Endothelial cell of umbilical vein (primary cell): ENCODE measurements at regions of chr16 and their contacts with region 1.

Region 1: GRCh38 chr16:20944861-20945574 is 44.4 kb downstream of the LYRM1 start:
- DNase-seq: peak; percentile 18
- H3K4me3 ChIP-seq: no peak overlapping the region
- H3K27ac ChIP-seq: no peak overlapping the region
- H3K4me1 ChIP-seq: no peaks in the 10 kb centered on the region
- H3K27me3 ChIP-seq: no peaks in the 10 kb centered on the region
- CTCF ChIP-seq: no peak
- POLR2A ChIP-seq: no peak

Region 2: GRCh38 chr16:20781697-20782096 is 163.3 kb before region 1 on chr16:
- CTCF ChIA-PET with region 1: no interaction called
- POLR2A ChIA-PET with region 1: no interaction called
- dilution Hi-C with region 1: no loop called
- intact Hi-C with region 1: no loop called
- DNase-seq: no peak
- H3K4me3 ChIP-seq: no peak overlapping the region
- H3K27ac ChIP-seq: no peak overlapping the region
- H3K4me1 ChIP-seq: no peaks in the 10 kb centered on the region
- H3K27me3 ChIP-seq: peaks cover 0 to 1% of the 10 kb centered on the region in 2 experiments
- CTCF ChIP-seq: no peak
- POLR2A ChIP-seq: no peak

Region 3: DNA sequence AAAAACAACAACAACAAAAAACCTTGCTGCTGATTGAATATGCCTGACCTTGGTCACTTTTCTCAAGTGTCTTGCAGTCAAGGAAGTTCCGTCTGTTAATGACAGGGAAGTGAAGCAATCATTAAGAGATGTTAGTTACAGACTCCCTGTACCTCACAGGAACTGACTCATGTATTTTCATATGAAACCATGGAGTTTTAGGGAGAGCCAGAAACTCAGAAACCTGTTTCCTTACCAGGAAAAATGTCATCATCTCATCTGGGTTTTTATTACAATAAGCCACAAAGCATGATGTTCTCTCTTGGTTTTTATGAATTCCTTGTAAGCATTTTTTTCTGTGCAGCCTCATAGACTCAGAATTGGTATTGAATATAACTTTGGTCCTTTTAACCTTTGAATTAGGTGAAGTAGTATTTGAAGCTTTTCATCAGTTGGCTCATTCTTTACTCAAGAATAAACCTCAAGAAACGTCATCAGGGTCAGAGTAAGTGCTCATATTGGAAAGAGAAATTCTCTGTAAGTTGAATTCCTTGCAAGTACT is 34.2 kb before region 1 on chr16:
- CTCF ChIA-PET with region 1: no interaction called
- POLR2A ChIA-PET with region 1: interaction called, 3 read pairs
- dilution Hi-C with region 1: no loop called
- intact Hi-C with region 1: loop called (anchors 2 kb)
- DNase-seq: peak; percentile 95
- H3K4me3 ChIP-seq: peak overlapping the region in 1 of 3 experiments; percentile 12
- H3K27ac ChIP-seq: peak overlapping the region; percentile 99
- H3K4me1 ChIP-seq: peaks cover 68% of the 10 kb centered on the region
- H3K27me3 ChIP-seq: no peaks in the 10 kb centered on the region
- CTCF ChIP-seq: no peak
- POLR2A ChIP-seq: peak; percentile 91

Region 4: GRCh38 chr16:20971401-20971800 is 26.4 kb after region 1 on chr16:
- CTCF ChIA-PET with region 1: no interaction called
- POLR2A ChIA-PET with region 1: no interaction called
- dilution Hi-C with region 1: no loop called
- intact Hi-C with region 1: no loop called
- DNase-seq: no peak
- H3K4me3 ChIP-seq: no peak overlapping the region
- H3K27ac ChIP-seq: no peak overlapping the region
- H3K4me1 ChIP-seq: no peaks in the 10 kb centered on the region
- H3K27me3 ChIP-seq: no peaks in the 10 kb centered on the region
- CTCF ChIP-seq: no peak
- POLR2A ChIP-seq: no peak